ENCODE measurements at regions of chr3 and their contacts with region 1.

Region 1: DNA sequence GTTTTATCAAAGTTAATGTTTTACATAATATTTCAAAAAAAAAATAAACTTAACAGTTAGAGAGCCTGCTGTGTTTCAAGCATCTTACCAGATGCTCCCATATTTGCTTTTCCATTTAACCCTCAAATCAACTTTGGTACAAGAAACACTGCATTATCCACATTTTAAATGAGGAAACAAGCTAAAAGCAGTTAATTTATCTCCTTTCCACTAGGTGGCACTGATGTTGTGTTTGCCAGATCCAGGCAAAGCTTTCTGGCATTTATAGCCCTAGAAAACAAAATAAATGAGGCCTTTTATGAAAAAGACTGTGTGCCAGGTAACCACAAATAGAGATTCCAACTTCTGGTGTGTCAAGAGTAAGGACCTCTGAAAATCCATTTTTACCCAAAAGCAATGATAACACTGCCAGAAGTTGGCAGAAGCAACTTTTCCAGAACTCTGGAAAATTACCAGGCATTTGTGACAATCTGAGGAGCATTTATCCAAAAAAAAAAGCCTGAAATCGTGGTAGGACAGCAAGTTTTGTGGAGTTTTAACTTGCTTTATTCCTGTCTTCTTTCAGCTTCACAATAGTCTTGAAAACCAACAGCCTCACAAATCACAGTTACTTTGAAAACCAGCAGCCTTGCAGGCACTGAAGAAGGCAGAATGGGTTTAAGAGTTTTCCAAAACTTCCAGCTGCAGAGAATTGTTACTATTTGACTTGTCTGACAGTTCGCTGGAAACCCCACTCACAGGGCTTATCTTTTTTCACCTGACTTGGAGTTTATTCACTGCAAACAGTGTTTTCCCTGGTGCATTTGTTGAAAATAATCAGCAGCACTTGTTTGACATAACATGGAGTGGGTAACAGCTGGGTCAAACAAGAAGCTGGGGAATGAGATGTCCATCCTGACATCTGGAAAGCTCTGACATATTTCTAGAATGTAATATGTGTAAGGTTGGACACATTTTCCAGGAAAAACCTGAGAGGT is 9.2 kb downstream of the FAM162A start:
- DNase-seq: peak; percentile 47
- ATAC-seq: no peak
- H3K4me3 ChIP-seq: no peak overlapping the region
- H3K27ac ChIP-seq: peak overlapping the region; percentile 72
- H3K4me1 ChIP-seq: peaks cover 63% of the 10 kb centered on the region
- H3K27me3 ChIP-seq: no peaks in the 10 kb centered on the region
- CTCF ChIP-seq: peak; percentile 71
- EP300 ChIP-seq: no peak
- POLR2A ChIP-seq: no peak
- RAD21 ChIP-seq: peak; percentile 42; the same call in 1 of the 2 replicates

Region 2: DNA sequence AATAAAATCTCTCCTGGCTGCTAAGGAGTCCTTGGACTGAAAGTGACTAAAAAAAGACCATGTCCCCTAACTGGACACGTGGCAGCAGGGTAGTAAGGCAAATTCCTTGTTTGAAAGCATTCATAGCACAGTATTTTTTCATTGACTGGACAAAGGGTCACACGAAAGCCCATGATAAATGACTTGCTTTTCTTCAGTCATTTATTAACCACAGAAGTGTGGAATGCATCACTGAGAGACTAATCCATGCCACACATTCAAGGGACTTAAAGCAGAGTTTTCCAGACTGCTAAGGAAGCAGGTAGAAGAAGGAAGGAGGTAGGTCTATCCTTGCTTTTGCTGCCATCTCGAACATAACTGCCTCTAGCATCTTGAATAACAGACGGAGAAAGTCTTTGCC is 178.4 kb before region 1 on chr3:
- CTCF ChIA-PET with region 1: no interaction called
- POLR2A ChIA-PET with region 1: no interaction called
- in situ Hi-C with region 1: no loop called
- intact Hi-C with region 1: no loop called
- DNase-seq: no peak
- ATAC-seq: no peak
- H3K4me3 ChIP-seq: no peak overlapping the region
- H3K27ac ChIP-seq: no peak overlapping the region
- H3K4me1 ChIP-seq: no peaks in the 10 kb centered on the region
- H3K27me3 ChIP-seq: no peaks in the 10 kb centered on the region
- CTCF ChIP-seq: no peak
- EP300 ChIP-seq: no peak
- POLR2A ChIP-seq: no peak
- RAD21 ChIP-seq: no peak

Region 3: DNA sequence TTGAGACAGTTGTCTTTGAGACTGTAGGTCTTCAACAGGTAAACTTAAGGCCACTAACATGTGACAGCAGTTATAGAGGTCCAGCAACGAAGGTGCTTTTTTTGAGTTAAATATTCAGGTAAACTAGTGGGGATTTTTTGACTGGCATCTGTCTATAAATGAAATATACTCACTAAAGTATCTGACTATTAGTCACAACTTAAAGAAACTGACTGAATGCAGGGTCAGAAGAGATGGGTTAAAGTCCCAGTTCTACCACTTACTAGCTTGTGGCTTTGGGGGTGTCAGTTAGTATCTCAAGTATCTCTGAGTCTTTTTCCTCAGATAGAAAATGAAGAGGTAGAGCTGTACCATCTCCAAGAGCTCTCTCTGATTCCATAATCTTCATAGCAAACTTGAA is 28.1 kb before region 1 on chr3:
- CTCF ChIA-PET with region 1: no interaction called
- POLR2A ChIA-PET with region 1: interaction called, 11 read pairs
- in situ Hi-C with region 1: no loop called
- intact Hi-C with region 1: no loop called
- DNase-seq: no peak
- ATAC-seq: no peak; the same call in 2 of the 3 replicates
- H3K4me3 ChIP-seq: no peak overlapping the region
- H3K27ac ChIP-seq: peak overlapping the region; percentile 96
- H3K4me1 ChIP-seq: peaks cover 71% of the 10 kb centered on the region
- H3K27me3 ChIP-seq: no peaks in the 10 kb centered on the region
- CTCF ChIP-seq: no peak
- EP300 ChIP-seq: no peak
- POLR2A ChIP-seq: no peak
- RAD21 ChIP-seq: no peak

Region 4: GRCh38 chr3:122415720-122416654 is 22.8 kb after region 1 on chr3 and contains the start of gene WDR5B:
- CTCF ChIA-PET with region 1: no interaction called
- POLR2A ChIA-PET with region 1: interaction called, 32 read pairs
- in situ Hi-C with region 1: no loop called
- intact Hi-C with region 1: loop called (anchors 2 kb)
- DNase-seq: peak; percentile 96
- ATAC-seq: peak; percentile 95
- H3K4me3 ChIP-seq: peak within 1 kb of the TSS; percentile 61 to 81 (median 81)
- H3K27ac ChIP-seq: peak within 1 kb of the TSS; percentile 89
- H3K4me1 ChIP-seq: peaks cover 33% of the 10 kb centered on the region
- H3K27me3 ChIP-seq: no peaks in the 10 kb centered on the region; a peak in 1 of 5 replicates
- CTCF ChIP-seq: no peak
- EP300 ChIP-seq: no peak
- POLR2A ChIP-seq: peak; percentile 90 to 97
- RAD21 ChIP-seq: peak; percentile 35; the same call in 1 of the 2 replicates
- total RNA-seq, gene WDR5B: 3.6 and 4.5 TPM in 2 replicates

Region 5: GRCh38 chr3:122661633-122662032 is 268.5 kb after region 1 on chr3:
- CTCF ChIA-PET with region 1: interaction called, 3 read pairs
- POLR2A ChIA-PET with region 1: no interaction called
- in situ Hi-C with region 1: no loop called
- intact Hi-C with region 1: loop called (anchors 2 kb)
- DNase-seq: no peak
- ATAC-seq: no peak
- H3K4me3 ChIP-seq: no peak overlapping the region
- H3K27ac ChIP-seq: no peak overlapping the region
- H3K4me1 ChIP-seq: no peaks in the 10 kb centered on the region
- H3K27me3 ChIP-seq: peaks cover 0 to 21% of the 10 kb centered on the region in 2 experiments; a peak in 2 of 5 replicates
- CTCF ChIP-seq: no peak
- EP300 ChIP-seq: no peak
- POLR2A ChIP-seq: no peak
- RAD21 ChIP-seq: no peak

Measured in HepG2 (cell line).